ENCODE measurements at regions of chr14 and their contacts with region 1.

Region 1: DNA sequence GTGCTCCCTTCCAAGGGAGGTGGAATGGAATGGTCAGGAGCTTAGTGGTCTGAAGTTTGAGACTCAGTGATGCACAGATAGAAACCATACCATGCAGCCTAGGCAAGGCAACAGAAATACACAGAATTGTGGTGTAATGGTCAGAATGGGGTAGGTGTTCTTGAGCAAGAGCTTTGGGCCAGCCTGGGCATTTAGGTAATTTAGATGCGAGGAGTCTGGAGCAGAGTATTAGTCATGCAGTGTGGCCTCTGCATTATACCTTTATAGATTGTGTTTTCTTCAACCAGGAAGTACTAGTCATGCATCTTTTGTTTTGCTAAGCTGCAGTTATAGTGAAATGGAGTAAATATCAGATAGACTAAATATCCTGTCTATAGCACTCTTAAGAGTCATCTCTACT is 118.3 kb downstream of the DAAM1 start:
- DNase-seq: peak; percentile 87
- H3K4me3 Mint-ChIP-seq: no peak overlapping the region
- H3K27ac Mint-ChIP-seq: peak overlapping the region; percentile 47
- H3K4me1 Mint-ChIP-seq: peaks cover 23% of the 10 kb centered on the region
- H3K27me3 Mint-ChIP-seq: no peaks in the 10 kb centered on the region
- CTCF ChIP-seq: no peak

Region 2: GRCh38 chr14:59275653-59276052 is 31.1 kb before region 1 on chr14:
- CTCF ChIA-PET with region 1: no interaction called
- POLR2A ChIA-PET with region 1: interaction called, 10 read pairs
- intact Hi-C with region 1: no loop called
- DNase-seq: peak; percentile 87
- H3K4me3 Mint-ChIP-seq: peak overlapping the region; percentile 33
- H3K27ac Mint-ChIP-seq: peak overlapping the region; percentile 81
- H3K4me1 Mint-ChIP-seq: peaks cover 39% of the 10 kb centered on the region
- H3K27me3 Mint-ChIP-seq: no peaks in the 10 kb centered on the region
- CTCF ChIP-seq: no peak

Region 3: GRCh38 chr14:59281613-59282377 is 25.0 kb before region 1 on chr14:
- CTCF ChIA-PET with region 1: no interaction called
- POLR2A ChIA-PET with region 1: interaction called, 21 read pairs
- intact Hi-C with region 1: no loop called
- DNase-seq: peak; percentile 80
- H3K4me3 Mint-ChIP-seq: peak overlapping the region; percentile 43
- H3K27ac Mint-ChIP-seq: peak overlapping the region; percentile 61
- H3K4me1 Mint-ChIP-seq: peaks cover 46% of the 10 kb centered on the region
- H3K27me3 Mint-ChIP-seq: no peaks in the 10 kb centered on the region
- CTCF ChIP-seq: no peak

Region 4: GRCh38 chr14:59547310-59547709 is 240.5 kb after region 1 on chr14:
- CTCF ChIA-PET with region 1: no interaction called
- POLR2A ChIA-PET with region 1: no interaction called
- intact Hi-C with region 1: no loop called
- DNase-seq: no peak
- H3K4me3 Mint-ChIP-seq: no peak overlapping the region
- H3K27ac Mint-ChIP-seq: no peak overlapping the region
- H3K4me1 Mint-ChIP-seq: no peaks in the 10 kb centered on the region
- H3K27me3 Mint-ChIP-seq: no peaks in the 10 kb centered on the region
- CTCF ChIP-seq: no peak

Measured in MCF 10A (cell line).